K562 (cell line): ENCODE measurements at regions of chr18 and their contacts with region 1.

Region 1: DNA sequence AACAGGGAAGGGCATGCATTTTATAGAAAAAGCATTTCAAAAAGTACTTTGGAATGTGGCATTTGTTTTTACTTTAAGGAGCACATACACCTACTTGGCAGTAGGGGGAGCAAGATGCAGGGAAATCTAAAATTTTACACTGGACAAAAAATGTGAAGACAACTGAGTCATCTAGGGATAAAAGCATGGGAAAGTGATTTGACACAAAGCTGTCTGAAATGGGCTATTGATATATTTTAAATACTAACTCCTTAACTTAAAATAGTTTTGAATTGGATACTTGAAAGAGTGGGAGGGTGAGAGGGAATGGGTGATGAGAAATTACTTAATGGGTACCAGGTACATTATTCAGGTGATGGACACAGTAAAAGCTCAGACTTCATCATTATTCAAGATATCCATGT is 15.8 kb downstream of the TMEM200C start:
- DNase-seq: peak in 3 of 4 experiments; percentile 26 to 39 (median 27)
- ATAC-seq: peak; percentile 44; the same call in 1 of the 3 replicates
- H3K4me3 ChIP-seq: no peak overlapping the region
- H3K27ac ChIP-seq: no peak overlapping the region
- H3K4me1 ChIP-seq: no peaks in the 10 kb centered on the region
- H3K27me3 ChIP-seq: no peaks in the 10 kb centered on the region
- CTCF ChIP-seq: peak; percentile 36 to 65 (median 62); a peak in 5 of 6 replicates
- EP300 ChIP-seq: no peak
- POLR2A ChIP-seq: no peak
- RAD21 ChIP-seq: peak; percentile 49 to 65

Region 2: DNA sequence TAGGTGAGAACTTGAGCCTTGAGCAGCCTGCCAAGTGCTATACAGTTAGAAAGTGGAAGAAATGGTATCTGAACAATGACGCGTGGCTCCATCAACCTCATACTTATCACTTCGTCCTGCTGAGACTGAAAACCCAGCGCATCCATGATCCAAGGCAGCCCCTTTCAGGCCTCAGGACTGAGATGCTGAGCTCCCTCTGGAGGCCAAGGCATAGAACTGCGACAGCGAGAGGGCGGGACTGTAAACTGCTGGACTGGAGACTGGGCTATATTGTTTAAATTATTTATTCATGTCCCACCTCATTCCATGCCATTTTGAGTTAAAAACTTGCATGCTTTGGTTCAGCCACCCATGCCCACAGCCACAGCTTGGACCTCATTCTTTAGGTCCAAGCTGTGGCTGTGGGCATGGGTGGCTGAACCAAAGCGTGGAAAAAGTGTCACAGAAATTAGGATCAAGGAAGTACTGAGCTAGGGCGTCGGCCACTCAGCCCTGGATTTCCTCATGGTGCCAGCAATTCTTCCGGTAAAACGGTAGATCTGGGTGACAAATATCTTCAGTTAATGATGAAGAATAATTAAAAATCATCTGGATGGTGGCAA is 339.7 kb after region 1 on chr18:
- CTCF ChIA-PET with region 1: no interaction called
- POLR2A ChIA-PET with region 1: no interaction called
- in situ Hi-C with region 1: no loop called
- intact Hi-C with region 1: loop called (anchors 10 kb)
- DNase-seq: peak; percentile 27 to 37 (median 36)
- ATAC-seq: peak; percentile 70; the same call in 2 of the 3 replicates
- H3K4me3 ChIP-seq: no peak overlapping the region
- H3K27ac ChIP-seq: no peak overlapping the region
- H3K4me1 ChIP-seq: no peaks in the 10 kb centered on the region
- H3K27me3 ChIP-seq: no peaks in the 10 kb centered on the region
- CTCF ChIP-seq: peak; percentile 45 to 53 (median 47)
- EP300 ChIP-seq: no peak
- POLR2A ChIP-seq: no peak
- RAD21 ChIP-seq: peak in 1 of 2 experiments; percentile 32; a peak in 1 of 4 replicates

Region 3: DNA sequence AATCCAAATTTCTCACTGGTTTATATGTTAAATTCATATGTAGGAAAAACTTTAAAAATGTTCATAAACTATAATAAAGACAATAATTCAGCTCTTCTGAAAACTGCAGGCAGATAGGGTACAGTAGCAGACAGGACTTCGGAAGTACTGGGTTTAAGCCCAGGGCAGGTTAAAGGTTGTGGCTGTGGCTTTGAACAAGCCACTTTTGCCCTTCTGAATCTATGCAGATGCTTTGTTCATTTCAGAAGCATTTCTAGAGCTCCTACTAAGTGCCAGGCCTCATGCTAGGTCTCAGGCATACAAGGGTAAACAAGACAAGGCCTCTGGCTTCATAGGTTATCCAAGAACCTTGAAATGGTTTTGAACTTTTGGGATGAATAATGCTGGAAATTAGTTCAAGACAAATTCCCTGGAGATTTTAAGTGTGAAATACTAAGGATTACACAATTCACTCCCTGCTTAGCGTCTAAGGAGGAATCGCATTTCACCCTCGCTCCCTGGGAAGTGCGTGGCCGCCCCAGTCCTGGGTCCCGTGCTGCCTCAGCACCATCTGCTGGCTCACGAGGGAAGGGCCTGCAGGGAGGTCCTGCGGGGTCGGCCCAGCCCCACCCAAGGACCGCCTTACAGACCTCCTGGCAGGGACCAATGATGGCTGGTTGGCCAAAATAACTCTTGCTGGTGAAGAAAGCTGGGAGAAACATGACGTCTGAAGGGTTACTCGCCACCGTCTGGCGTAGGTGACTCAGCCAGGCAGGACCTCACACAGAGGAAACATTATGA is 602.9 kb after region 1 on chr18:
- CTCF ChIA-PET with region 1: no interaction called
- POLR2A ChIA-PET with region 1: no interaction called
- in situ Hi-C with region 1: no loop called
- intact Hi-C with region 1: loop called (anchors 10 kb)
- DNase-seq: peak; percentile 41 to 52 (median 47)
- ATAC-seq: peak; percentile 97
- H3K4me3 ChIP-seq: no peak overlapping the region
- H3K27ac ChIP-seq: no peak overlapping the region
- H3K4me1 ChIP-seq: peaks cover 0 to 3% of the 10 kb centered on the region in 2 experiments; a peak in 1 of 5 replicates
- H3K27me3 ChIP-seq: no peaks in the 10 kb centered on the region
- CTCF ChIP-seq: peak; percentile 45 to 70 (median 50)
- EP300 ChIP-seq: no peak
- POLR2A ChIP-seq: no peak
- RAD21 ChIP-seq: peak in 1 of 2 experiments; percentile 59; a peak in 2 of 4 replicates

Region 4: GRCh38 chr18:6521795-6522418 is 642.4 kb after region 1 on chr18:
- CTCF ChIA-PET with region 1: no interaction called
- POLR2A ChIA-PET with region 1: no interaction called
- in situ Hi-C with region 1: no loop called
- intact Hi-C with region 1: loop called (anchors 5 kb)
- DNase-seq: peak; percentile 40 to 61 (median 53)
- ATAC-seq: peak; percentile 84
- H3K4me3 ChIP-seq: no peak overlapping the region
- H3K27ac ChIP-seq: no peak overlapping the region
- H3K4me1 ChIP-seq: no peaks in the 10 kb centered on the region
- H3K27me3 ChIP-seq: no peaks in the 10 kb centered on the region
- CTCF ChIP-seq: peak; percentile 52 to 79 (median 71)
- EP300 ChIP-seq: no peak
- POLR2A ChIP-seq: no peak
- RAD21 ChIP-seq: peak in 1 of 2 experiments; percentile 78; a peak in 3 of 4 replicates